Activated CD4-positive, alpha-beta T cell treated with anti-CD3 and anti-CD28 coated beads for 36 hours (primary cell): ENCODE measurements at regions of chr12 and their contacts with region 1.

Region 1: DNA sequence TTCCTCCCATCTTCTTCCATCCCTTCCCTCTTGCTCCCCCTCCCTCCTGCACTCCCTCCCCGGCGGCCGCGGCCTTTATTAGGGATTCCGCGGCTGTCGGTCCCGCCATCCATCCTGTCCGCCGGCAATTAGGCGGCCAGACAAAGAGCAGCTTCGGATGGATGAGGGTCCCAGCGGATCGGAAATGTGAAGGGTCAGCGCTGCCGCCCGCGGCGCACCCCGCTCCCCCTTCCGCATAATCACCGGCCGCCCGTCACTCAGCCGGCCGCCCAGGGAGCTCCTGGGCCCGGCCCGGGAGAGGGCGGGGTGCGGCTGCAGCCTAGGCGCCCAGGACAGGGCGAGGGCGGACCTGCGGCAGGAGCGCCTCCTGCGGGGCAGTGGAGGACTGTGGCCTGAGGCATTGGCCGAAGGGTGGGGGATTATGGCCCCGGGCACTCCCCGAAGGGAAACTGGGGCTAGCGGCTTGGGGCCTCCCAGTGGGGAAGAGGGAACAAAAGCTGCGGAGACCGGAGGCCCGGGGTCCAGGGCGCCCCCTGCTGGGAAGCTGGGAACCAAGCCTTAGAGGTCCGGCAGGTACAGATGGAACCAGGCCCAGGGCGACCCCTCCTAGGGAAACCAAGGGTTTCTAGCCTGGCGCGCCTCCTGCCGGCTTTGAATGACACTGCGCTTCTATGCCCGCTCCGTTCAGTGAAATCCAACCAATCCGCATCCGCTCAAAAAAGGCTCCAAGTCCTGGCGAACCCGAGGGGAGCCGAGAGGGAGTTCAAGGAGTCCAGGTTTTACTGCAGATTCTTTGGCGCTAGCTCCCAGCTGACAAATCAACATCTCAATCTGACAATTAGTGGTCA is 4.4 kb upstream of the DNAJC22 start:
- DNase-seq: peak; percentile 92
- ATAC-seq: peak; percentile 81
- H3K4me3 Mint-ChIP-seq: peak overlapping the region; percentile 47
- H3K27ac Mint-ChIP-seq: no peak overlapping the region
- H3K4me1 Mint-ChIP-seq: peaks cover 47% of the 10 kb centered on the region
- H3K27me3 Mint-ChIP-seq: peaks cover 71% of the 10 kb centered on the region

Region 2: GRCh38 chr12:49288412-49288853 is 53.9 kb before region 1 on chr12:
- CTCF ChIA-PET with region 1: interaction called, 168 read pairs
- POLR2A ChIA-PET with region 1: no interaction called
- intact Hi-C with region 1: loop called (anchors 1 kb)
- DNase-seq: peak; percentile 81
- ATAC-seq: peak; percentile 80
- H3K4me3 Mint-ChIP-seq: no peak overlapping the region
- H3K27ac Mint-ChIP-seq: no peak overlapping the region
- H3K4me1 Mint-ChIP-seq: no peaks in the 10 kb centered on the region
- H3K27me3 Mint-ChIP-seq: peaks cover 22% of the 10 kb centered on the region

Region 3: DNA sequence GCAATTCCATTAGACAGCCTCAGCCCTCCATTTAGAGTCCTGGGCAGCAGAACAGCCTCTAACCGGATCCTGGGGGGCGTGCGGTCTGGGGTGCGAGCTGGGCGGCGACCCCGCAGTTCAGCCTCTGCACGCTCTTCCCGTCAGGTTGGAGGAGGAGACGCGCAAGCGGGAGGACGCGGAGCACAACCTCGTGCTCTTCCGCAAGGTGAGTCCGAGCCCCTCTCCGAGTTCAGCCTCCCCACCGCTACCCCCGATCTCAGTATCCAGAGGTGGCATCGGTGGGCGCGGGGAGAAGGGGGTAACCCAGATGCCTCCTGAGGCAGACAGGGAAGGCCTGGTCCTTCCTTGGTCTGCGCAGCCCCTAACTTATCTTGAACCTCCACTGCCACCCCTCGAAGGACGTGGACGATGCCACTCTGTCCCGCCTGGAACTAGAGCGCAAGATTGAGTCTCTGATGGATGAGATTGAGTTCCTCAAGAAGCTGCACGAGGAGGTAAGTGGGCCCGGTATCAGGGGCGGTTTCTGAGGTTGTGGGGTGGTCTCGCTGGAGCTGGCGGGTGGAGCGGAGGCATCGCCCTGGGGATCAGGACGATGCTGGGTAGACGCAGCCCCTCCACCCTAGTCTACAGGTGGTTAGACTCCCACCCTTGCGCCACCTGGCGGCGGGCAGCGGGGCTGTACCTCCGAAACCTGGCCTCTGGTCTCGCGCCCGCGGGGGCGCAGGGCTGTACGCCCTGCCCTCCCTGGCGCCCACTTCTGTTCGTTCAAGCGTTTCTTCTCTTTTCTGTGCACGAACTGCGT is 46.1 kb before region 1 on chr12:
- CTCF ChIA-PET with region 1: interaction called, 168 read pairs
- POLR2A ChIA-PET with region 1: no interaction called
- intact Hi-C with region 1: loop called (anchors 1 to 2 kb)
- DNase-seq: peak; percentile 82
- ATAC-seq: peak; percentile 80
- H3K4me3 Mint-ChIP-seq: peak overlapping the region; percentile 53
- H3K27ac Mint-ChIP-seq: no peak overlapping the region
- H3K4me1 Mint-ChIP-seq: peaks cover 12% of the 10 kb centered on the region
- H3K27me3 Mint-ChIP-seq: peaks cover 46% of the 10 kb centered on the region

Region 4: GRCh38 chr12:49331380-49332222 is 10.7 kb before region 1 on chr12:
- CTCF ChIA-PET with region 1: interaction called, 20 read pairs
- POLR2A ChIA-PET with region 1: interaction called, 3 read pairs
- intact Hi-C with region 1: no loop called
- DNase-seq: no peak
- ATAC-seq: no peak
- H3K4me3 Mint-ChIP-seq: no peak overlapping the region
- H3K27ac Mint-ChIP-seq: no peak overlapping the region
- H3K4me1 Mint-ChIP-seq: peaks cover 10% of the 10 kb centered on the region
- H3K27me3 Mint-ChIP-seq: peaks cover 37% of the 10 kb centered on the region

Region 5: GRCh38 chr12:49366652-49367380 is 24.5 kb after region 1 on chr12:
- CTCF ChIA-PET with region 1: interaction called, 20 read pairs
- POLR2A ChIA-PET with region 1: interaction called, 6 read pairs
- intact Hi-C with region 1: no loop called
- DNase-seq: peak; percentile 94
- ATAC-seq: peak; percentile 86
- H3K4me3 Mint-ChIP-seq: peak overlapping the region; percentile 97
- H3K27ac Mint-ChIP-seq: peak overlapping the region; percentile 99
- H3K4me1 Mint-ChIP-seq: peaks cover 25% of the 10 kb centered on the region
- H3K27me3 Mint-ChIP-seq: no peaks in the 10 kb centered on the region

Region 6: DNA sequence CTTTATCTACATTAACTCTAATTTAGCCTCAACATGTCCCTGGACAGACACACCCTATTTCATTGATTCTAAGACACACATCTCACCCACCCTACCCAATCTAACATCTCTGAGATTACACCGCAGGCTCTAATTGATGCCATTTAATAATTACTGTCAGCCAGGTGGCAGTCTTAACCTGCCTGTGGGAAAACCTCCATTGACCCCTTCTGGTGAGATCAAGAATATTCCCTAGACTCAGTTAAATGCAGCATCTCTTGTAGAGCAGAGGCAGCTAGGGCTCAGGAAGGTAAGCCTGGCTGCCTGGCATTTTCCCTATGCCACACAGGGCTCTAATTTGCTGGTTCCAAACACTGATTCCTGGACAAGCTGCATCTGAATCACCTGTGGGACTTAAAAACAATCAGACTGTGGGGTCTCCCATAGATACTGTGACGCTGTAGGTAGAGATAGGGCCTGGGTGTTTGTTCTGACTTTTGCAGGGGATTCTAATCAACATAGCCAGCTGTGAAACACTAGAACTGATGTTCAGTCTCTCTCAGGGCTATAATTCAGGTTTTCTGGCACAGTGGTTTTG is 211.3 kb after region 1 on chr12:
- CTCF ChIA-PET with region 1: no interaction called
- POLR2A ChIA-PET with region 1: no interaction called
- intact Hi-C with region 1: no loop called
- DNase-seq: no peak
- ATAC-seq: peak; percentile 74
- H3K4me3 Mint-ChIP-seq: no peak overlapping the region
- H3K27ac Mint-ChIP-seq: no peak overlapping the region
- H3K4me1 Mint-ChIP-seq: peaks cover 3% of the 10 kb centered on the region
- H3K27me3 Mint-ChIP-seq: peaks cover 3% of the 10 kb centered on the region